K562 (cell line): ENCODE measurements at regions of chr12 and their contacts with region 1.

Region 1: DNA sequence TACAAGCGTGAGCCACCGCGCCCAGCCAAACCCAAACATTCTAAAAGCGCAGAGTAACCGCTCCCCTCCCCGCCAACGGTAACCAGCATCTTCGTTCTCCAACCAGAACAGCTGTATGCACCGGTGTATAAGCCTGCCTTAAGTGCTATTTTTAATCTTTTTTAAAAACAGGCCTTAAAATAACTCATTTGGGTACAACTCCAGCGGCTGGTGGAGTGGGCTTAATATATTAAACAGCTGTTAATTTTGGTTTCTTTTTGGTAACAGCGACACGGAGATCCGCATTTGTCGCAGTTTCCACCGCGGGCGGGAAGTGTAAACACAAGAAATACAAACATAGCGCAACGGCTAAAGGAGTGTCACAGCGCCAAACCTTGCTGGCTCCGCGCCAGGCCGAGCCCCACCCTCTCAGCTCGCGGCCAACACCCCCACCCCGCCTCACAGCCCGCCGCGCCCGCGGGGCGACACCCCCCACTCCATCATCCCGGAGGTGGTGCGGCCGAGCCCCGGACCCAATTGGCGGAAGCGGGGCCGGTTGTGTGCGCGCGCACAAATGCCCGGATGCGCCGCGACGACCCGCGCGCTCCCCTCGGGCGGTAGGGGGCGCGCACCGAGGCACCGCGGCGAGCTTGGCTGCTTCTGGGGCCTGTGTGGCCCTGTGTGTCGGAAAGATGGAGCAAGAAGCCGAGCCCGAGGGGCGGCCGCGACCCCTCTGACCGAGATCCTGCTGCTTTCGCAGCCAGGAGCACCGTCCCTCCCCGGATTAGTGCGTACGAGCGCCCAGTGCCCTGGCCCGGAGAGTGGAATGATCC is at the start of gene MDM2:
- DNase-seq: peak; percentile 95 to 99 (median 96)
- ATAC-seq: peak; percentile 92
- H3K4me3 ChIP-seq: peak within 1 kb of the TSS; percentile 95
- H3K27ac ChIP-seq: peak within 1 kb of the TSS; percentile 99
- H3K4me1 ChIP-seq: peaks cover 14 to 24% of the 10 kb centered on the region in 2 experiments
- H3K27me3 ChIP-seq: no peaks in the 10 kb centered on the region
- CTCF ChIP-seq: peak; percentile 69 to 74 (median 69)
- EP300 ChIP-seq: peak; percentile 59
- POLR2A ChIP-seq: peak; percentile 89
- RAD21 ChIP-seq: peak in 1 of 2 experiments; percentile 20; a peak in 1 of 4 replicates
- polyA plus RNA-seq, gene MDM2: 13.6 to 21.8 TPM

Region 2: GRCh38 chr12:68745904-68746571 is 61.7 kb before region 1 on chr12 and contains the start of gene SLC35E3:
- CTCF ChIA-PET with region 1: interaction called, 3 read pairs
- POLR2A ChIA-PET with region 1: interaction called, 21 read pairs
- in situ Hi-C with region 1: no loop called
- intact Hi-C with region 1: loop called (anchors 1 kb)
- DNase-seq: peak; percentile 95 to 97 (median 96)
- ATAC-seq: peak; percentile 98
- H3K4me3 ChIP-seq: peak within 1 kb of the TSS; percentile 66
- H3K27ac ChIP-seq: peak within 1 kb of the TSS; percentile 62
- H3K4me1 ChIP-seq: peaks cover 2 to 7% of the 10 kb centered on the region in 2 experiments; a peak in 2 of 5 replicates
- H3K27me3 ChIP-seq: no peaks in the 10 kb centered on the region
- CTCF ChIP-seq: no peak
- EP300 ChIP-seq: peak; percentile 26; the same call in 1 of the 2 replicates
- POLR2A ChIP-seq: peak; percentile 86
- RAD21 ChIP-seq: peak in 1 of 2 experiments; percentile 24; a peak in 2 of 4 replicates
- polyA plus RNA-seq, gene SLC35E3: 3.5 to 3.8 TPM

Region 3: DNA sequence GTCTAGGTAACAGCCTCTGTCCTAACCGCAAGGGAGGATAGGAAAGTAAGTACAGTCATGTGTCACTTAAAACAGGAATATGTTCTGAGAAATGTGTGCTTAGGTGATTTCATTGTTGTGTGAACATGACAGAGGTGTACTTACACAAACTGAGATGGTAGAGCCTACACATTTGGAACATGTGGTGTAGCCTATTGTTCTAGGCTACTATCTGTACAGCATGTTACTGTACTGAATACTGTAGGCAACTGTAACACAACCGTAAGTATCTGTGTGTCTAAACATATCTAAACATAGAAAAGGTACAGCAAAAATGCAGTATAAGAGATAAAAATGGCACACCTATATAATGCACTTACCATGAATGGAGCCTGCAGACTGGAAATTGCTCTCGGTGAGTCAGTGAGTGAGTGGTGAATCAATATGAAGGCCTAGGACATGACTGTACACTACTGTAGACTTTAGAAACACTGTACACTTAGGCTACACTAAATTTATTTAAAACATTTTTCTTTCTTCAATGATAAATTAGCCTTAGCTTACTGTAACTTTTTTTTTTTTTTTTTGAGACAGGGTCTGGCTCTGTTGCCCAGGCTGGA is 13.0 kb before region 1 on chr12:
- CTCF ChIA-PET with region 1: no interaction called
- POLR2A ChIA-PET with region 1: interaction called, 19 read pairs
- in situ Hi-C with region 1: no loop called
- intact Hi-C with region 1: no loop called
- DNase-seq: no peak
- ATAC-seq: no peak
- H3K4me3 ChIP-seq: no peak overlapping the region
- H3K27ac ChIP-seq: no peak overlapping the region
- H3K4me1 ChIP-seq: peaks cover 0 to 4% of the 10 kb centered on the region in 2 experiments; a peak in 1 of 5 replicates
- H3K27me3 ChIP-seq: no peaks in the 10 kb centered on the region
- CTCF ChIP-seq: no peak
- EP300 ChIP-seq: no peak
- POLR2A ChIP-seq: no peak
- RAD21 ChIP-seq: no peak

Region 4: DNA sequence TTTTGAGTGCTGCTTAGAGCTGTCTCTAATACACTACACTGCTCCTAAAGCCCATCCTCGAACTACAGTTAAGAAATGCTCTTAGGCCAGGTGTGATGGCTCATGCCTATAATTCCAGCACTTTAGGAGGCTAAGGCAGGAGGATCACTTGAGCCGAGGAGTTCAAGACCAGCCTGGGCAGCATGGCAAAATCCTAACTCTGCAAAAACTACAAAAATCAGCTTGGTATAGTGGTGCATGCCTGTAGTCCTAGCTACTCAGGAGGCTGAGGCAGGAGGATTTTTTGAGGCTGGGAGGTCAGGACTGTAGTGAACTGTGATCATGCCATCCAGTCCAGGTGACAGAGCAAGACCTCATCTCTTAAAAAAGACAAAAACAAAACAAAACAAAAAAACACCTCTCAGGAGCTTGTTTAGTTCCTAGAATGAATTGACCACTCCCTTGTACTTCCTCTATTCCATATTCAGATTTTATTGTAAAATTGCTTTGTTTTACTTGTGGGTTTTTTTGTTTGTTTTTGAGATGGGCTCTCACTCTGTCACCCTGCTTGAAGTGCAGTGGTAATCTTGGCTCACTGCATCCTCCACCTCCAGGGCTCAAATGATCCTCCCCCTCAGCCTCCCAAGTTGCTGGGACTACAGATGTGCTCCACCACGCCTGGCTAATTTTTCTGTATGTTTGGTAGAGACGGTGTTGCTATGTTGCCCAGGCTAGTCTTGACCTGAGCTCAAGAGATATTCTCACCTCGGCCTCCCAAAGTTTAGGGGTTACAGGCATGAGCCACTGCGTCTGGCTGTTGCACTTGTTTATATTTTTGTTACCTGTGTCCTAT is 13.8 kb after region 1 on chr12:
- CTCF ChIA-PET with region 1: no interaction called
- POLR2A ChIA-PET with region 1: interaction called, 41 read pairs
- in situ Hi-C with region 1: no loop called
- intact Hi-C with region 1: no loop called
- DNase-seq: no peak
- ATAC-seq: peak; percentile 62
- H3K4me3 ChIP-seq: no peak overlapping the region
- H3K27ac ChIP-seq: no peak overlapping the region
- H3K4me1 ChIP-seq: no peaks in the 10 kb centered on the region
- H3K27me3 ChIP-seq: no peaks in the 10 kb centered on the region
- CTCF ChIP-seq: no peak
- EP300 ChIP-seq: no peak
- POLR2A ChIP-seq: no peak
- RAD21 ChIP-seq: no peak

Region 5: DNA sequence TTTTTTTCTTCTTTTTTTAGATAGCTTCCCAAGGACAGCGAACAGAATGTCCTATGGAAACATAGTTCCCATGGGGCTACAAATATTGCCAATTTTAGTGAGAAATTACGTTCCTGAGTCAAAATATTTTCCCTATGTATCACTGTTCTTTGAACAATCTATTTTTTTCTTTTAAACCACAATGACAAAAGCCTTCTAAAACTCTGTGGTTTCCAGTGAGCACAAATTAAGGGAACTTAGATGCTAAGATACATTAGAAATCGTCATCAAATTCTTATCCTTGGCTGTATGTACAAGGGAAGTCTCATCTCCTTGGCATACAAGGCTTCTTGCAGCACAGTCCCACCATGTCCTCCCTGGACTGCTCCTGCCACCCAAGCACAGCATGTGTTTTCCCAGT is 107.3 kb after region 1 on chr12:
- CTCF ChIA-PET with region 1: no interaction called
- POLR2A ChIA-PET with region 1: no interaction called
- in situ Hi-C with region 1: no loop called
- intact Hi-C with region 1: no loop called
- DNase-seq: no peak
- ATAC-seq: no peak
- H3K4me3 ChIP-seq: no peak overlapping the region
- H3K27ac ChIP-seq: no peak overlapping the region
- H3K4me1 ChIP-seq: no peaks in the 10 kb centered on the region
- H3K27me3 ChIP-seq: peaks cover 7 to 8% of the 10 kb centered on the region in 2 experiments; a peak in 3 of 5 replicates
- CTCF ChIP-seq: no peak
- EP300 ChIP-seq: no peak
- POLR2A ChIP-seq: no peak
- RAD21 ChIP-seq: no peak